B cell (primary cell): ENCODE measurements at regions of chr4 and their contacts with region 1.

Region 1: DNA sequence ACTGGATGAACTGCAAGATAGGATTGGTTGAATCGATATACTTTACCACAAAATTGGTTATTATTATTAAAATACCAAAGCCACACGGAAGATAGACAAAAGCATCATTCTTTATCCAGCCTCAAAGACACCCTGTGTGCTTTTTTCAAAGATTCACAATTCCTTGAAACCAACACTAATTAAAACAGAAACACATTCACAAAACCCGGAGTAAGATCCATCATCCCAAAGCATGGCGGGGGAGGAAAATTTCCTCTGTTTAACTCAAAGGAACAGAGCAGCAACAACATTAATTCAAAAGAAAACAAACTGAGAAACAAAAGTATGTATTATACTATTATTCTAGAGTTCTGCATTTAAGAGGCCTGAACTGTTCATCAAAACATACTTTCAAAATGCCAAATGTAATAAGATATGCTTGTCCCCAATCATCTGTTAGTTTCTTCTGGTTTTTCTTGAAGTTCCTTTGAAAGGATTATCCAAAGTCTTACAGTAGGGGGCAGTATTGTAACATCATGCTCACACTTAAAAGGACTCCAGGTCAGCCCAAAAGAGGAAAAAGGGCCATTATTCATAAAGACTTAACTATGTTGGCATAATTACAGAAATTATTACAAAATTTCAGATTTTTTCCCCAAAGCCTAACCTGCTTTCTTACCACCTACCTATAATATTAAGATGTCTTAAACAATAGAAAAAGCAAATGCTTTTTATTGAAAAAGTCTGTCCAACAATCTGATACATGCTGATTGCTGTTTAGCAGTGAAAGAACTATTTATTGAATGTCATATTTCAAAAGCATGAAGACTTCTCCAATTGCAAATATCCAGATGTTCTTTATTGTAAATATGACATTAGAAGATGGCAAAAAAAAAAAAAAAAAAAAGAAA is 168.7 kb downstream of the SCFD2 start:
- DNase-seq: peak; percentile 72
- ATAC-seq: no peak
- H3K4me3 ChIP-seq: no peak overlapping the region
- H3K4me3 Mint-ChIP-seq: no peak overlapping the region
- H3K27ac ChIP-seq: no peak overlapping the region
- H3K27ac Mint-ChIP-seq: no peak overlapping the region
- H3K4me1 ChIP-seq: peaks cover 0 to under 1% of the 10 kb centered on the region in 2 donors
- H3K4me1 Mint-ChIP-seq: peaks cover under 1% of the 10 kb centered on the region
- H3K27me3 ChIP-seq: no peaks in the 10 kb centered on the region
- H3K27me3 Mint-ChIP-seq: no peaks in the 10 kb centered on the region
- CTCF ChIP-seq: peak; percentile 88

Region 2: GRCh38 chr4:52529983-52530382 is 667.1 kb before region 1 on chr4:
- CTCF ChIA-PET with region 1: no interaction called
- POLR2A ChIA-PET with region 1: no interaction called
- intact Hi-C with region 1: no loop called
- DNase-seq: no peak
- ATAC-seq: no peak
- H3K4me3 ChIP-seq: no peak overlapping the region
- H3K4me3 Mint-ChIP-seq: no peak overlapping the region
- H3K27ac ChIP-seq: no peak overlapping the region
- H3K27ac Mint-ChIP-seq: no peak overlapping the region
- H3K4me1 ChIP-seq: no peaks in the 10 kb centered on the region
- H3K4me1 Mint-ChIP-seq: no peaks in the 10 kb centered on the region
- H3K27me3 ChIP-seq: no peaks in the 10 kb centered on the region
- H3K27me3 Mint-ChIP-seq: peaks cover 3% of the 10 kb centered on the region
- CTCF ChIP-seq: no peak

Region 3: DNA sequence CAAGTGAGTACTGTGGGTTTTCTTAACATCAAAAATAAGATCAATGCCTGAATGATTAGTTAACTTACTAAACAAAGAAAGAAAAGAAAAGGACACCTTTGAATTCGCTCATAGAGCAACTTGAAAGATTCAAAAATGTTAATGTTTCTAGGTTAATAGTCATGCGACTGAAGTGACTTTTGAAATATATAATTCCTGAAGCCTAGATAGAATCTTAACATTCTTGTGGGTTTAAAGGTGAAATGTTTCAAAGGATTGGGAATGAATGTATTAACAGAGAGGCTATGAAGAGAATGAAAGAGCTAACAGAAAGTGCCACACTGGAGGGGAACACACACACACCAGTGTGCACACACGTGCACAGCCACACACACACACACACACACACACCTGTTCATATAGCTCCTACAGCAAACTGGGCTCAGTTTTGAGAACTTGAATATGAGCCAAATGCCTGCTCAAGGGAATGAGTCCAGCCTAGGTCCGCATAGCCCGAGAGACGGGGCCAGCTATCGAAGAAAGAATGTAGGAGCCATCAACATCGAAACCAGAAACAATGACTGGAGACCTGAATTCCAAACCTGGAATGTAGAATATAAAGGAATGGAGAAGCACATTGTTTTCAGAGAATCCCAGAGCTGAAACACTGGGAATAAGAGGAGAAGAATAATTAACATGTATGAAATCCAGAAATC is 408.5 kb before region 1 on chr4:
- CTCF ChIA-PET with region 1: no interaction called
- POLR2A ChIA-PET with region 1: no interaction called
- intact Hi-C with region 1: no loop called
- DNase-seq: no peak
- ATAC-seq: no peak
- H3K4me3 ChIP-seq: no peak overlapping the region
- H3K4me3 Mint-ChIP-seq: no peak overlapping the region
- H3K27ac ChIP-seq: no peak overlapping the region
- H3K27ac Mint-ChIP-seq: no peak overlapping the region
- H3K4me1 ChIP-seq: no peaks in the 10 kb centered on the region
- H3K4me1 Mint-ChIP-seq: no peaks in the 10 kb centered on the region
- H3K27me3 ChIP-seq: no peaks in the 10 kb centered on the region
- H3K27me3 Mint-ChIP-seq: peaks cover 10% of the 10 kb centered on the region
- CTCF ChIP-seq: no peak

Region 4: DNA sequence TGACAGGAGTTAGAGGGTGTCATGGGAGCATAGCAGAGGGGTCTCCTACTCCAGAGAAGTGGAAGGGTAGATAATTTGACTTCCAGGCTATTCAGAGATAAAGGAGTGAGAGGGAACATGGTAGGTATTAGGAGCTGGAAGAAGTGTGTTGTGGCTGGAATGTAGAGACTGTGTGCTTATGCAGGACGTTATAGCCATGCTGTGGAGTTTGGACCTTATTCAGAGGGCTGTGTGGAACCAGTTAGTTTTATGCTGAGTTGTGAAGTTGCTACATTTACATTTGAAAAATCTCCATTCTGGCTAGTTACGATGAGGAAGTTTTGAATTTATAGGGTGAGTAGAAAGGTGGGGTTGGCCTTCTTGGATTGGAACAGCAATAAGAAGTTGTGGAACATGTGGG is 247.8 kb after region 1 on chr4:
- CTCF ChIA-PET with region 1: no interaction called
- POLR2A ChIA-PET with region 1: no interaction called
- intact Hi-C with region 1: loop called (anchors 10 kb)
- DNase-seq: no peak
- ATAC-seq: no peak
- H3K4me3 ChIP-seq: no peak overlapping the region
- H3K4me3 Mint-ChIP-seq: no peak overlapping the region
- H3K27ac ChIP-seq: no peak overlapping the region
- H3K27ac Mint-ChIP-seq: no peak overlapping the region
- H3K4me1 ChIP-seq: no peaks in the 10 kb centered on the region
- H3K4me1 Mint-ChIP-seq: no peaks in the 10 kb centered on the region
- H3K27me3 ChIP-seq: no peaks in the 10 kb centered on the region
- H3K27me3 Mint-ChIP-seq: no peaks in the 10 kb centered on the region
- CTCF ChIP-seq: no peak

Region 5: DNA sequence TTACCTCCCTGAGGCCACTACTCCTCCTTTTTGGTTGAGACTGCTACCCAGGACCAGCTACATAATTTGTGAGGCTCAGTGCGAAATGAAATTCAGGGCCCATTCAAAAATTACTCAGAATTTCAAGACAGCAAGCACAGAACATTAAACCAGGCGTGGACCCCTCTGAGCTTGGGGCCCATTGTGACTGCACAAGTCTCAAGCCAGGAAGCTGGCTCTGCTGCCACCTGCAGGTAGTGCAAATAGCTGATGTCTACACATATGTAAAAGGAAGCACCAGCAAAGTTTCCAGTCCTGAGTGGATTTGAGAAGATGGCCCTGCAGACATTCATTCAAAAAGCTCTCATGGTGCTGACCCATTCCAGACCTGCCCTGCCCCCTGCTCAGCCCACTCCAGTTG is 607.6 kb after region 1 on chr4:
- CTCF ChIA-PET with region 1: interaction called, 5 read pairs
- POLR2A ChIA-PET with region 1: no interaction called
- intact Hi-C with region 1: loop called (anchors 1 kb)
- DNase-seq: peak; percentile 53
- ATAC-seq: no peak
- H3K4me3 ChIP-seq: no peak overlapping the region
- H3K4me3 Mint-ChIP-seq: no peak overlapping the region
- H3K27ac ChIP-seq: no peak overlapping the region
- H3K27ac Mint-ChIP-seq: no peak overlapping the region
- H3K4me1 ChIP-seq: no peaks in the 10 kb centered on the region
- H3K4me1 Mint-ChIP-seq: no peaks in the 10 kb centered on the region
- H3K27me3 ChIP-seq: no peaks in the 10 kb centered on the region
- H3K27me3 Mint-ChIP-seq: peaks cover 6% of the 10 kb centered on the region
- CTCF ChIP-seq: peak; percentile 46